Activated naive CD4-positive, alpha-beta T cell treated with anti-CD3 and anti-CD28 coated beads for 36 hours (primary cell): ENCODE measurements at regions of chr3 and their contacts with region 1.

Region 1: DNA sequence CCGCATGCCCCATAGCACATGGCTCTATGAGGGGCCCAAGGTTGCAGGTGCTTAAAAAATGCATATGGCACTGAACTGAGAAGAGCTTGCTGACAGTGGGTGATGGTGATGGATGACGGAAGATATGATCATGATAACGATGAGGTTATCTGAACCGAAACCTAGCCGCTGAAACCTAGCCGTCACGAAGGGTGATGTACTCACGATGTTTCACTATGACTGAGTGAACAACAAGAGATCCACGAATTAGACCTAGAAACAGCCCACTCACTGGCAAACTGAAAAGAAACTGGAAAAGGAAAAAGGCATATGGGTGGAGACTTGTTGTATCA is 57.6 kb upstream of the BCL6 start:
- DNase-seq: peak; percentile 89
- H3K4me3 Mint-ChIP-seq: peak overlapping the region; percentile 1
- H3K27ac Mint-ChIP-seq: peak overlapping the region; percentile 79
- H3K4me1 Mint-ChIP-seq: peaks cover 95% of the 10 kb centered on the region
- H3K27me3 Mint-ChIP-seq: no peaks in the 10 kb centered on the region

Region 2: GRCh38 chr3:187640569-187641059 is 162.3 kb before region 1 on chr3:
- CTCF ChIA-PET with region 1: no interaction called
- intact Hi-C with region 1: no loop called
- DNase-seq: no peak
- H3K4me3 Mint-ChIP-seq: no peak overlapping the region
- H3K27ac Mint-ChIP-seq: no peak overlapping the region
- H3K4me1 Mint-ChIP-seq: no peaks in the 10 kb centered on the region
- H3K27me3 Mint-ChIP-seq: peaks cover 17% of the 10 kb centered on the region

Region 3: DNA sequence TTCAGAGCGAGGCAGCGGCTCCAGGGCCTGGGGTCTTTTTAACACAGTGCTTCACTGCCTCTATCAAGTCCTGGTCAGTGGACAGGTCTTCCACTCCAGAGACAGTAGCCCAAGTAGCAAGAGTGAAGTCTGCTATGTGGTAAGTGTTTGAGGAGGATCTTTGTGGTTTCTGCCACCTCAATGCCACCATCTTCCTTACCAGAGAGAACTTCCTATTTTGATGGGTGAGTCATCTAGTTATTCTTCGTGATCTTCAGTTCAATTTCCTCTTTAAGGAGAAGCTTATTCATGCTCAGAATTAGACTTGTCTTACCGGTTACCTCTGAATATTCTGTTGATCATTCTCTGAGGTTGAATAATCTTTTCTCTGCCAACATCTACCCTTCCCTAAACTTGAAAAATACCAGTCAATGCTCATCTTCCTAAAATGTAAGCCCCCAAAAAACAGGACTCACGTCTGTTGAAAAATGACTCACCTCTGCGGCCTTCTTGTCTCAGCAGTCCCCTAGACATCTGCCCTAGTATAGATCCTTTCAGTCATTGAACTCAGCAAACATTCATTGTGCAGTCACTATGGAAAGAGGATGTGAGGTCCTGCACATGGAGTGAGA is 25.5 kb before region 1 on chr3:
- CTCF ChIA-PET with region 1: interaction called, 6 read pairs
- intact Hi-C with region 1: loop called (anchors 1 kb)
- DNase-seq: peak; percentile 76
- H3K4me3 Mint-ChIP-seq: peak overlapping the region; percentile 48
- H3K27ac Mint-ChIP-seq: peak overlapping the region; percentile 96
- H3K4me1 Mint-ChIP-seq: peaks cover 31% of the 10 kb centered on the region
- H3K27me3 Mint-ChIP-seq: no peaks in the 10 kb centered on the region

Region 4: DNA sequence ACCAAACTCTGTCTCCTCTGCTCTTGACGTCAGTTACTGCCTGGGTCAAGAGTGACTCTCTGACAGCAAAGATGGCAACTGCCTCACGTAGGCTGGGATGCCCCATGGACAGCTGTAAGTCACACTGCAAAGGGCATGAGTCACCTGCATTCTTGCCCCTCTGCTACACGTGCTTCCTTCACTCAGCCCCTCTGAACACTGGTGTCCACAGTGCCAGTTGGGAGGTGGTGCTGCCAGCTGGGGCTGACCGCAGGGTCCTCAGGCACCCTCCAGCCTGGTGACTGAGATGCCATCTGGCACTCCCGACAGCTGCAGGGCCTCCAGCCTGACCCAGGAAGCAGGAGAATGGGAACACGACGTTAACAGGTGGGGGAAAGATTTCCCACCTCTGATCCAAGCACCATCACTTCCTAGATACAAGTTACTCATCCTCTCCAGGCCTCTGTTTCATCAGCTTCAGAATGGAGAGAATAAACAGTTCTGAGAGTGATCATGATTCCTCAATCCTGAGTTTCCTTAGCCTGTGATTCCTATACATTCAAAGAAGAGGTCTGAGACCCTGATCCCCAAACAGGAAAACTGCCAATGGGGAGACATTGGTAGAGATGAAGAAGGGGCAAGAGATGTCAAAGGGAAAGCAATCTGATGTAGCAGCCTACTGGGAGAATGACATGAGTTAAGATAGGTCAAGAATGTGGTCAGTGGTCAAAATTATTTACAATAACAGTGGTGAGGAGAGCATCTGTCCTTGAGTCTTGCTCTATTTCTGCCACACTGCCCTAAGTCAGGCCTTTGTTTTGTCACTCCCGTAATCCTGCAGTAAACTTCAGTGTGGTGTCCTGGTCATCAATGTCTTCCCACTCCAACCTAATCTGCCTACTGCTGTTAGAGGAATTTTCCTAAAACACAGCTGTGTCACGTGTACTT is 28.5 kb after region 1 on chr3:
- CTCF ChIA-PET with region 1: interaction called, 3 read pairs
- intact Hi-C with region 1: loop called (anchors 1 kb)
- DNase-seq: no peak
- H3K4me3 Mint-ChIP-seq: no peak overlapping the region
- H3K27ac Mint-ChIP-seq: no peak overlapping the region
- H3K4me1 Mint-ChIP-seq: peaks cover 30% of the 10 kb centered on the region
- H3K27me3 Mint-ChIP-seq: no peaks in the 10 kb centered on the region

Region 5: GRCh38 chr3:188061133-188061532 is 258.2 kb after region 1 on chr3:
- CTCF ChIA-PET with region 1: interaction called, 3 read pairs
- intact Hi-C with region 1: loop called (anchors 1 kb)
- DNase-seq: peak; percentile 74
- H3K4me3 Mint-ChIP-seq: no peak overlapping the region
- H3K27ac Mint-ChIP-seq: peak overlapping the region; percentile 68
- H3K4me1 Mint-ChIP-seq: peaks cover 32% of the 10 kb centered on the region
- H3K27me3 Mint-ChIP-seq: no peaks in the 10 kb centered on the region